PC-3 (cell line): ENCODE measurements at regions of chr5 and their contacts with region 1.

Region 1: GRCh38 chr5:13478831-13479465 is 465.5 kb downstream of the DNAH5 start:
- DNase-seq: peak; percentile 83
- ATAC-seq: peak; percentile 57
- H3K4me3 ChIP-seq: no peak overlapping the region; the same call in 1 of the 2 replicates
- H3K27ac ChIP-seq: no peak overlapping the region
- H3K4me1 ChIP-seq: peaks cover 49% of the 10 kb centered on the region
- H3K27me3 ChIP-seq: no peaks in the 10 kb centered on the region
- CTCF ChIP-seq: peak; percentile 94

Region 2: GRCh38 chr5:12704955-12705354 is 774.0 kb before region 1 on chr5:
- CTCF ChIA-PET with region 1: no interaction called
- POLR2A ChIA-PET with region 1: no interaction called
- intact Hi-C with region 1: loop called (anchors 2 kb)
- DNase-seq: peak; percentile 56
- ATAC-seq: peak; percentile 48; the same call in 1 of the 2 replicates
- H3K4me3 ChIP-seq: no peak overlapping the region
- H3K27ac ChIP-seq: no peak overlapping the region
- H3K4me1 ChIP-seq: no peaks in the 10 kb centered on the region
- H3K27me3 ChIP-seq: no peaks in the 10 kb centered on the region
- CTCF ChIP-seq: peak; percentile 81

Region 3: GRCh38 chr5:12951846-12952245 is 527.1 kb before region 1 on chr5:
- CTCF ChIA-PET with region 1: no interaction called
- POLR2A ChIA-PET with region 1: no interaction called
- intact Hi-C with region 1: loop called (anchors 5 kb)
- DNase-seq: peak; percentile 61
- ATAC-seq: peak; percentile 49
- H3K4me3 ChIP-seq: no peak overlapping the region
- H3K27ac ChIP-seq: peak overlapping the region; percentile 36
- H3K4me1 ChIP-seq: peaks cover 21% of the 10 kb centered on the region
- H3K27me3 ChIP-seq: no peaks in the 10 kb centered on the region
- CTCF ChIP-seq: no peak

Region 4: GRCh38 chr5:13278148-13278547 is 200.8 kb before region 1 on chr5:
- CTCF ChIA-PET with region 1: no interaction called
- POLR2A ChIA-PET with region 1: no interaction called
- intact Hi-C with region 1: no loop called
- DNase-seq: peak; percentile 22
- ATAC-seq: no peak
- H3K4me3 ChIP-seq: no peak overlapping the region
- H3K27ac ChIP-seq: no peak overlapping the region
- H3K4me1 ChIP-seq: no peaks in the 10 kb centered on the region
- H3K27me3 ChIP-seq: no peaks in the 10 kb centered on the region
- CTCF ChIP-seq: peak; percentile 80

Region 5: GRCh38 chr5:13378083-13378482 is 100.9 kb before region 1 on chr5:
- CTCF ChIA-PET with region 1: no interaction called
- POLR2A ChIA-PET with region 1: no interaction called
- intact Hi-C with region 1: loop called (anchors 5 kb)
- DNase-seq: peak; percentile 97
- ATAC-seq: peak; percentile 88
- H3K4me3 ChIP-seq: no peak overlapping the region
- H3K27ac ChIP-seq: peak overlapping the region; percentile 90
- H3K4me1 ChIP-seq: peaks cover 21% of the 10 kb centered on the region
- H3K27me3 ChIP-seq: no peaks in the 10 kb centered on the region
- CTCF ChIP-seq: no peak

Region 6: DNA sequence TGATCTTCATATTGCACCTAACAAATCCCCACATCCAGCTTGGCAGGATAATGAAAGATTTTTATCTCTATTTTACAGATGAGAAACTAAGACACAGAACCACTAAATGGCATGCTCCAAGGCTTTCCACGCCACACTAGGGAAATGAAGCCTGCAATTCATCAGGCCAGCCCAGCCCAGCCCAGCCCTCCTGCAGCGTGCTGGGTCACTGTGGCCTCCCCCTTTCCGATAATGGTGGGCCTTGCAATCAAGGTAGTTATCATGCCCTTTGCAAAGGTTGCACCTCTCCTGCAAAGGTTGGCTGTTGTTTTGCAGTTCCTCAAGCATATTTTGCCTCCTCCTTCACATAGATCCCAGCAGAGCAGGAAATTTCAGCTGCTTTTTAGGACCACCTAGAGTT is 43.0 kb after region 1 on chr5:
- CTCF ChIA-PET with region 1: no interaction called
- POLR2A ChIA-PET with region 1: no interaction called
- intact Hi-C with region 1: no loop called
- DNase-seq: no peak
- ATAC-seq: no peak
- H3K4me3 ChIP-seq: no peak overlapping the region
- H3K27ac ChIP-seq: no peak overlapping the region
- H3K4me1 ChIP-seq: peaks cover 2% of the 10 kb centered on the region
- H3K27me3 ChIP-seq: no peaks in the 10 kb centered on the region
- CTCF ChIP-seq: no peak

Region 7: GRCh38 chr5:13536921-13537320 is 58.0 kb after region 1 on chr5:
- CTCF ChIA-PET with region 1: no interaction called
- POLR2A ChIA-PET with region 1: no interaction called
- intact Hi-C with region 1: no loop called
- DNase-seq: no peak
- ATAC-seq: no peak
- H3K4me3 ChIP-seq: no peak overlapping the region
- H3K27ac ChIP-seq: no peak overlapping the region
- H3K4me1 ChIP-seq: no peaks in the 10 kb centered on the region
- H3K27me3 ChIP-seq: no peaks in the 10 kb centered on the region
- CTCF ChIP-seq: no peak

Region 8: DNA sequence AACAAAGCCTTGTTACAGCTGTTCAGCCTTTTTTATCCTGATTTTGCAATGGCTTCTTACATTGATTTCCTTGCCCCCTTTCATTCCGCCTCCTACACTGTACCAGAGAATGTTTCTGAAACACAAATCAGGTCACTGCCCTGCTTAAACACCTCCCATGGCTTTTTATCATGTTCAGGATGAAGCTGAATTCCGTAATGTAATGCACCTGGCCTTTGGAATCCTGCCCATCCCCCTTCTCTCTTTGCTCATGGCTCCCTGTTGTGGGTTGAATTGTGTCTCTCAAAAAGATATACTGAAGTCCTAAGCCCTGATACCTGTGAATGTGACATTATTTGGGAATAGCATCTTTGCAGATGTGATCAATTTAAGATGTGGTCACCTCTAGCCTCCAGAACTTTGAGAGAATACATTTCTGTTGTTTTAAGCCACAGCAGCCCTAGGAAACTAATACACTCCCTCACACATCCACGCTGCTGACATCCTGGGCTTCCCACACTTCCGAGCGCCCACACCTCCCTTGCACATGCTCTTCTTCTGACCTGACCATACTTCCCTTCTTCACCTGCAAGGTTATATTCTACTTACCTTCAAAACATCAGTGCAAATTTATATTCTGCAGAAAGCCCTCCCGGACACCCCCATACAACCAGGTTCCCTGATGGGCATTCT is 364.4 kb after region 1 on chr5:
- CTCF ChIA-PET with region 1: no interaction called
- POLR2A ChIA-PET with region 1: no interaction called
- intact Hi-C with region 1: no loop called
- DNase-seq: no peak
- ATAC-seq: no peak
- H3K4me3 ChIP-seq: no peak overlapping the region
- H3K27ac ChIP-seq: no peak overlapping the region
- H3K4me1 ChIP-seq: no peaks in the 10 kb centered on the region
- H3K27me3 ChIP-seq: no peaks in the 10 kb centered on the region
- CTCF ChIP-seq: no peak

Region 9: DNA sequence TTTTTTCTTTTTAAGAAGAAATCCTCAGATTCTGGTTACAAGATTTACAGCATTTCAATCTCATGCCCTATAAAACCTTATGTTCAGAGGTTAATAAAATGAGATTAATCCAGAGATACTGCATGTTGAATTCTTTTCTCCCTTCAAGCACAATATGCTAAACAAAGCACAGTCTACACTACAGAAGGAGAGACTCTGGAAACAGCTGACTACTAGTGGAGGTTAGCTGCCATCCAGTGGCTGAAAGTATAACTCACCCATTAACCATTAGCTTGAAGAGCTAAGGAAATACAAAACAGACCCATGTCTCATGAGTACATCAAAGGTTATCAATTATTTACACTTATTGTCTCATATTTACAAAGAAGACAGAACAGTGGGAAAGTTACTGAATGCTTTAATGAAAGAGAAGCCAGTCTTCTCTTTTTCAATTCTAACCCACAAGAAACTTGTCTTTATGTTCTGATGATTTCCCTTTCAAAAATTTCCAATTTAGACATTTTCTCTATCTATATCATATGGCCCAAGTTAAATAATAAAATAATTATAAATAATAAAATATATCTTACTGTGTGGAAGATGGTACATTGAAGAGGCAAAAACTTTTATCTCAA is 478.2 kb after region 1 on chr5:
- CTCF ChIA-PET with region 1: no interaction called
- POLR2A ChIA-PET with region 1: no interaction called
- intact Hi-C with region 1: loop called (anchors 1 kb)
- DNase-seq: peak; percentile 91
- ATAC-seq: peak; percentile 100
- H3K4me3 ChIP-seq: no peak overlapping the region
- H3K27ac ChIP-seq: no peak overlapping the region
- H3K4me1 ChIP-seq: no peaks in the 10 kb centered on the region
- H3K27me3 ChIP-seq: no peaks in the 10 kb centered on the region
- CTCF ChIP-seq: peak; percentile 97